Sciatic nerve (tissue), 2 donors: ENCODE measurements at regions of chrX and their contacts with region 1.

Region 1: DNA sequence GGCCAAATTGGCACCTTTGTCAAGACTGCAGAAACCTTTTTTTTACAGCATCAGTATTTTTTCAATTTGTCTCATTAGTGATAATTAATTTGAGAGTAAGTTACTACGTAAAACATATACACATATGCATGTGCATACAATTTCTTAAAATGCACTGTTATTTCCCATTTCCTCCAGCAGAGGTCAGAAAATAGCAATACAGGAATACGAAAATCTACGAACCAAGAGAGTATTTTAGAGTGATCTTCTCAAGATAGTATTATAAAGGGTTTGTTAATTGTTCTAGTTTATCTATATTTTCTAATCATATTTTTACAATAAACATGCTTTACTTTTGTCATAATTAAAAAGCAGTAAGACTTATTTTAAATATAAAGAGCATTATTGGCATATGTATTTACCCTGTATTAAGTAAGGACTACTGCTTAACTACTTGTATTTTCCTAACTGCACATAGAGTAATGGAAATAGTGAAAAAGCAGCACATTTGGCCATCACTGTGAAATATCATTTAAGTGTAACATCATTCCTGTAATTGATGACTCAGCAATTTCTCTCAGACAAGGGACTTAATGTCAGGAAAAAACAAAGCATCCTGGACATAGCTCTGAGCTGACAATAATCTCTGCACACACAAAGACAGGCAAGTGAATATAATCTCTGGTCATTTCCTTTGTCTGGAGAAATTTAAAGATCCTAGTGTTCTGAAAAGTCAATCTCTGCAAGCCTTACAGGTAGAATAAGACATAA is 45.6 kb downstream of the MAOB start:
- DNase-seq: no peak
- ATAC-seq: no peak

Region 2: GRCh38 chrX:43456906-43457305 is 379.7 kb before region 1 on chrX:
- intact Hi-C with region 1: no loop called
- DNase-seq: no peak
- ATAC-seq: no peak

Region 3: GRCh38 chrX:43949669-43950068 is 113.1 kb after region 1 on chrX:
- intact Hi-C with region 1: loop called (anchors 10 kb)
- DNase-seq: no peak
- ATAC-seq: peak; percentile 28